ENCODE measurements at regions of chr21 and their contacts with region 1.

Region 1: DNA sequence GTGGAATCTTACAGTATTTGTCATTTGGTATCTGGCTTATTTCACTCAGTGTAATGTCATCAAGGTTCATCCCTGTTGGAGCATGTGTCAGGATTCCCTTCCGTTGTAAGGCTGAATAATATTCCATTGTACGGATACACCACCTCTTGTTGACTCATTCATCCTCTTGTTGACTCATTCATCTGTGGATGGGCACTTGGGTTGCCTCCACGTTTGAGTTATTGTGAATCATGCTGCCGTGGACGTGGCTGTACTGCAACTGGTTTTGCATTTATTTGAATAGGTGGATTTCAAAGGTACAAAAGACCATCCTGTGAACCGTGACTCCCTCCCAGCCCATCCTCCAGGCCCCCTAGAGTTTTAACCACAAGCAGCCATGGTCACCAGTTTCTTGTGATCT is 11.9 kb upstream of the TCP10L start:
- DNase-seq: no peak
- ATAC-seq: no peak
- H3K4me3 ChIP-seq: no peak overlapping the region
- H3K27ac ChIP-seq: no peak overlapping the region
- H3K4me1 ChIP-seq: no peaks in the 10 kb centered on the region
- H3K27me3 ChIP-seq: no peaks in the 10 kb centered on the region
- CTCF ChIP-seq: no peak

Region 2: GRCh38 chr21:32475164-32475812 is 121.9 kb before region 1 on chr21:
- intact Hi-C with region 1: loop called (anchors 10 kb)
- DNase-seq: no peak
- ATAC-seq: no peak
- H3K4me3 ChIP-seq: no peak overlapping the region
- H3K27ac ChIP-seq: no peak overlapping the region
- H3K4me1 ChIP-seq: peaks cover 25% of the 10 kb centered on the region
- H3K27me3 ChIP-seq: no peaks in the 10 kb centered on the region
- CTCF ChIP-seq: no peak

Measured in upper lobe of right lung (tissue), 1 donor.